Activated CD4-positive, alpha-beta T cell treated with anti-CD3 and anti-CD28 coated beads, Interleukin-2, amount 10 ng/mL, durations not matched to agents 24 days and 14 days (primary cell): ENCODE measurements at regions of chr3 and their contacts with region 1.

Region 1: DNA sequence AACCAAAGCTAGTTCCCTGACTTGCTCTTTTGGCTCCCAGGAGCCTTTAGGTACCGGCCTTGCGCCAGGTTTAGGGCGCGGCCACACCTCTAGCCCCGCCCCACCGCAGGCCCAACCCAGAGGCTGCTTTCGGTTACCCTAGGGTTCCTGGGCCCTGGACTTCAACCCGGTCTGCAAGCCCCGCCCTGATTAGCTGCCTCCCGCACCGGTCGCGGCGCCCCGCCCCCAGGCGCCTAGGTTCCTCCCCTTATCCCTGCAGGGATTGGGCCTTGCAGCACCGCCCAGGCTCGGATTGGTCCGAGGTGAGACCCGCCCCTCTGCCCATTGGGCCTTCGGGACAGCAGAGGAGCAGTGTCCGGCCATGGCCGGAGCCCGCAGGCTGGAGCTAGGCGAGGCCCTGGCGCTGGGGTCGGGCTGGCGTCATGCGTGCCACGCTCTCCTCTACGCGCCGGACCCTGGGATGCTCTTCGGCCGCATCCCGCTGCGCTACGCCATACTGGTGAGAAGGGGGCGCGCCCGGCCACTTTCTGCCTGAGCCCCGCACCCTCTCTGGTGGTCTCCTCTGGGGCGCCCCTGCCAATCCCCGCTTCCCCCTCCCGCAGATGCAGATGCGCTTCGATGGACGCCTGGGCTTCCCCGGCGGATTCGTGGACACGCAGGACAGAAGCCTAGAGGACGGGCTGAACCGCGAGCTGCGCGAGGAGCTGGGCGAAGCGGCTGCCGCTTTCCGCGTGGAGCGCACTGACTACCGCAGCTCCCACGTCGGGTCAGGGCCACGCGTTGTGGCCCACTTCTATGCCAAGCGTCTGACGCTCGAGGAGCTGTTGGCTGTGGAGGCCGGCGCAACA is at the start of gene NUDT16:
- DNase-seq: peak; percentile 100
- H3K4me3 Mint-ChIP-seq: peak within 1 kb of the TSS; percentile 95
- H3K27ac Mint-ChIP-seq: peak within 1 kb of the TSS; percentile 95
- H3K4me1 Mint-ChIP-seq: peaks cover 38% of the 10 kb centered on the region
- H3K27me3 Mint-ChIP-seq: no peaks in the 10 kb centered on the region
- total RNA-seq, gene NUDT16: 8.4 TPM in 2 replicates

Region 2: GRCh38 chr3:130111185-130111864 is 1270.3 kb before region 1 on chr3:
- intact Hi-C with region 1: loop called (anchors 5 kb)
- DNase-seq: peak; percentile 100
- H3K4me3 Mint-ChIP-seq: peak overlapping the region; percentile 97
- H3K27ac Mint-ChIP-seq: peak overlapping the region; percentile 99
- H3K4me1 Mint-ChIP-seq: peaks cover 13% of the 10 kb centered on the region
- H3K27me3 Mint-ChIP-seq: peaks cover 2% of the 10 kb centered on the region

Region 3: DNA sequence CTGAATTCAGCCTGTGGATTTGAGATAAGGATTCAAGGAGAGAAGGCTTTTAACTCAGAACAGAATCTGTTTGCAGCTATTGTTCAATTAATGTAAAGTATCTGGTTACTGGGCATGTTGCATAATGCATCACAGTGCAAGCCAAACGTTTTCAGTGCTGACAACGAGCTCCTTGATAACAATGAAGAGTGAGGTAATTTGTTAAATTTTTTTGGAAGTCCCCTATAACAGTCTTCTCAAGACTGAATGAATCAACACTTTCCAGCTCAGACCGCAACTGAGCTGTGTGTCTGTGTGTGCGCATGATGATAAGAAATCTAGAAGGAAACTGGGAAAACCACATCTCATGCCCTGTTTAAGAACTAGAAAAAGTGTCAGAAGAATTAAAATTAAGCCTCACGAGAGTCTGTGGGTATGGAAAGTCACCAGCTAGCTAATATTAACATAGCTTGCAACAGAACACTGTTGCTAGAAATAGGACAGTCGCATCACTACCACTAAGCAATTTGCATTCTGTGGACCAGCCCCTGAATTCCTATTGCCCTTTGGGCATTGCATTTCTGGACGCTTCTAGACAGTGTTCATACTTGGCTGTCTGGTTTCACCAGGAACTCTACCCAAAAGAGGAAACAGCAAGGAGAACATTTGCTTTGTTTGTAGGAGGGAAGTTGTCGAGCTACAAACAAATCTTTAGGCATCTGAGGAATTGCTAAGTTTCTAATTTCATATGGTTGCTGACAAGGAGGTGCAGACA is 531.4 kb before region 1 on chr3:
- intact Hi-C with region 1: loop called (anchors 5 kb)
- DNase-seq: peak; percentile 87
- H3K4me3 Mint-ChIP-seq: peak overlapping the region; percentile 64
- H3K27ac Mint-ChIP-seq: peak overlapping the region; percentile 75
- H3K4me1 Mint-ChIP-seq: peaks cover 26% of the 10 kb centered on the region
- H3K27me3 Mint-ChIP-seq: peaks cover 34% of the 10 kb centered on the region

Region 4: DNA sequence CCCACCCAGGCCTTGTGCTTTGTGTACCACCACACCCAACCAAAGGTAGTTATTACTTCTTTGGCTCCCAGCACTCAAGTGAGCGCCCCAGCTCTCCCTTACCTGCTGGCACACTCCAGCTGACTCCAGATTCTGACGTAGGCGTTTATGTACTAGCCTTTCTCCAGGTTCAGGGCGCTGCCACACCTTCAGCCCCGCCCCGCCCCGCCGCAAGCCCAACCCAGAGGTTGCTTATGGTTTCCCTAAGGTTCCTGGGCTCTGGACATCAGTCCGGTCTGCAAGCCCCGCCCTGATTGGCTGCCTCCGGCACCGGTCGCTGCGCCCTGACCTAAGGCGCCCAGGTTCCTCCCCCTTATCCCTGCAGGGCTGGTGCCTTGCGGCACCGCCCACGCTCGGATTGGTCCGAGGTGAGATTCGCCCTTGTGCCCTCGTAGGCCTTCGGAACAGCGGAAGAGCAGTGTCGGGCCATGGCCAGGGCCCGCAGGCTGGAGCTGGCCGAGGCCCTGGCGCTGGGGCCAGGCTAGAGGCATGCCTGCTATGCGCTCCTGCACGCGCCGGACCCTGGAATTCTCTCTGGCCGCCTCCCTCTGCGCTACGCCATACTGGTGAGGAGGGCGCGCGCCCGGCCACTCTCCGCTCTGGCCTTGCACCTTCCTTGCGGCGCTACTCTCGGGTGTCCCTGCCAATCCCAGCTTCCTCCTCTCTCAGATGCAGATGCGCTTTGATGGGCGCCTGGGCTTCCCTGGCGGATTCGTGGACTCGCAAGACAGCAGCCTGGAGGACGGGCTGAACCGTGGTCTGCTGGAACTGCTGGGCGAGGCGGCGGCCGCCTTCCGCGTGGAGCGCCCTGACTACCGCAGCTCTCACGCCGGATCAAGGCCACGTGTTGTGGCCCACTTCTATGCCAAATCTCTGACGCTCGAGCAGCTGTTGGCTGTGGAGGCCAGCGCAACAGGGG is 19.9 kb before region 1 on chr3:
- intact Hi-C with region 1: loop called (anchors 2 kb)
- DNase-seq: peak; percentile 69
- H3K4me3 Mint-ChIP-seq: peak overlapping the region; percentile 80
- H3K27ac Mint-ChIP-seq: no peak overlapping the region
- H3K4me1 Mint-ChIP-seq: peaks cover 12% of the 10 kb centered on the region
- H3K27me3 Mint-ChIP-seq: peaks cover 31% of the 10 kb centered on the region

Region 5: GRCh38 chr3:131470377-131470776 is 88.7 kb after region 1 on chr3:
- intact Hi-C with region 1: loop called (anchors 2 kb)
- DNase-seq: no peak
- H3K4me3 Mint-ChIP-seq: no peak overlapping the region
- H3K27ac Mint-ChIP-seq: peak overlapping the region; percentile 54
- H3K4me1 Mint-ChIP-seq: peaks cover 18% of the 10 kb centered on the region
- H3K27me3 Mint-ChIP-seq: no peaks in the 10 kb centered on the region

Region 6: DNA sequence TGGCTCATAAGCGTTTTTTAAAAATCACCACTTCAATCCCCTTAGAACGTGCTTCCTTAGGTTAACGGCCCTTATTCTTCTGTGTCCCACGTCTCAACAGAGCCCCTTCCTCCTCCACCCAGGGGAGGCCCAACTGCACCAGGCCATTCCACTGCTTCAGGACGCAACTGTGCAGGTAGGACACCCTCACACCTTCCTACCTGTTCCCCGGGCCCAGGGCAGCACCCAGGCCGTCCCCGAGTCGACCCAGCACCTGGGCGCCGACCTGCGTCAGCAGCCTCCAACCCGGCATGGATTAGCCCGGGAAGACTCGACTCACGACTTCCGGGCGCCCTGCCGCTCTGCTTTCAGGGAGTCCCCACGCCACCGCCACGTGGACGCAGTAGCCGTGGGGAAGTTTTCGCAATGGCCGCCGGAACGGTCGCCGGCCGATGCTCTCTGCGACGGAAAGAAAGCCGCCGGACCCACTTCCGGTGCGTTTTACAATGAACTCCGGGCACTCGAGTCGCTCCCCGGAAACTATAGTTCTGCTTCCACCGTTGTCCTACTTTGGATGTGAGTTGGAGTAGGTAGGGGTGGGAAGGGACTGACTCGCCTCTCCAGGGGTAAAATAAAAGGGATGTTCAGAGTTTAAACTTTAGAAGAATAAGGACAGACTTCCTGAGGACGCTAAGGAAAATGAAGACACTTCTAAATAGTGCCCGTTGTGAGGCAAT is 121.0 kb after region 1 on chr3 and contains the start of gene MRPL3:
- intact Hi-C with region 1: loop called (anchors 1 kb)
- DNase-seq: peak; percentile 95
- H3K4me3 Mint-ChIP-seq: peak within 1 kb of the TSS; percentile 100
- H3K27ac Mint-ChIP-seq: peak within 1 kb of the TSS; percentile 98
- H3K4me1 Mint-ChIP-seq: peaks cover 30% of the 10 kb centered on the region
- H3K27me3 Mint-ChIP-seq: no peaks in the 10 kb centered on the region
- total RNA-seq, gene MRPL3: 175 and 189 TPM in 2 replicates

Region 7: GRCh38 chr3:131995891-131996290 is 614.2 kb after region 1 on chr3:
- intact Hi-C with region 1: no loop called
- DNase-seq: no peak
- H3K4me3 Mint-ChIP-seq: no peak overlapping the region
- H3K27ac Mint-ChIP-seq: no peak overlapping the region
- H3K4me1 Mint-ChIP-seq: no peaks in the 10 kb centered on the region
- H3K27me3 Mint-ChIP-seq: peaks cover 4% of the 10 kb centered on the region